ENCODE measurements at regions of chr17 and their contacts with region 1.

Region 1: DNA sequence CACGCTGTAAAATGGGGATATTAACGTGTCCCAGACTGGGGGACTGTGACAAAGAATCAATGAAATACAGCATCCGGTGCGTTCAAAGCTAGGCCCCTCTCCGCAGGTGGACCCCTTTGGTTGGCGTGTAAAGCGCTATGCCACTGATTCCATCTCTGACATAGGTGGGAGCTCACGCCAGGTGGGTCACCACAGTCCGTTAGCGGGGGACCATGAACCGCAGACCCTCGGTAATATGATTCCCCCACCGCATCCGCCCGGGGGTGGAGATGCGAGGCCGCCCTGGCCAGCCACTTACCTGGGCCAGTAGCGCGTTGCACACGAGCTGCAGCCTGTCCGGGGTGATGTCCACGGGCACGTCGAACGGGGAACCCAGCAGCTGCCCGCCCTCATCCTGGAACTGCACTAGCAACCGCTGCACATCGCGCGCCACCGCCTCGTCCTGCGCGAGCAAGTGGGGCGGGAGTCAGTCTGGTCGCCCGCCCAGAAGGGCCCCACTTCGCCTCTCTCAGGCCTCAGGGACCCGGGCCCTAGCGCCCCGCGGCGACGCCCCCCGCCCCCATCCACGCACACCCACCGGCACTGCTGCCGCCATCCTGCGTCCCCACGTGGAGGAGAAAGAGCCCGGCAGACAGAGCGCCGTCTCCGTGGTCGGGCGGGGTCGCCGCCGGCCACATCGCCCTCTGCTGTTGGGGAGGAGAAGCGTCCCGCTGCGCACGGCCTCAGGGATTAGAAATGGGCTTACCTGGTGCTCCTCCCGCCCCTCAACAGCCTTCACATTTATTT is at the start of gene NLE1:
- DNase-seq: peak; percentile 84
- H3K4me3 ChIP-seq: peak within 1 kb of the TSS; percentile 59 to 91 (median 78)
- H3K27ac ChIP-seq: peak within 1 kb of the TSS in 3 of 4 donors; percentile 35 to 63 (median 46)
- H3K4me1 ChIP-seq: peaks cover 0 to 18% (median 13%) of the 10 kb centered on the region in 4 donors
- H3K27me3 ChIP-seq: no peaks in the 10 kb centered on the region
- CTCF ChIP-seq: peak; percentile 81 to 96 (median 94)
- EP300 ChIP-seq: no peak
- POLR2A ChIP-seq: peak; percentile 33
- total RNA-seq, gene NLE1: 4.0 to 13.2 (median 6.9) TPM

Region 2: DNA sequence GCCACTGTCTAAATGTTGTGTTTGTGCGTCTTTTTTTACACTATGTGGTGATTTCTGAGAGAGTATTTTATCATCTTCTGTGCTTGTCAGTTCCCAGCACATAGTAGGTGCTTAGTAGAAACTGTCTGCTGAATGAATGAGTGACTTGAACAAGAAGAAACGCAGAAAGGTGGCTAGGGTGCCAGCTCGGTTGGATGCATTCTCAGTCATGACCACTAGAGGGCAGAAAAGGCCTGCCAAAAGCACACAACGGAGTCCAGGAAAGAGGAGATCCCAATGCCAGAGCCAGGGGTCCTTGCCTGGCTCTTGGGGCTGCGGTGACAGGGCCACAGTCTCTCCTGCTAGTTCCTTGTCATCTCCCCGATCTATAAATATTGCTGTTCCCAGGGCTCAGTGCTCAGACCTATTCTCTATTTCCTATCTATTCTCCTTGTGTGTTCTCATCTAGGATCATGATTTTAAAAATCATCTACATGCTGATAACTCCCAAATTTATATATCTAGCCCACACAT is 721.6 kb before region 1 on chr17:
- in situ Hi-C with region 1: loop called in 1 of 4 experiments (anchors 25 kb)
- intact Hi-C with region 1: no loop called
- DNase-seq: peak; percentile 67
- H3K4me3 ChIP-seq: no peak overlapping the region
- H3K27ac ChIP-seq: no peak overlapping the region
- H3K4me1 ChIP-seq: peaks cover 0 to 3% (median 0%) of the 10 kb centered on the region in 4 donors
- H3K27me3 ChIP-seq: peaks cover 49% of the 10 kb centered on the region
- CTCF ChIP-seq: peak; percentile 84 to 97 (median 95)
- EP300 ChIP-seq: no peak
- POLR2A ChIP-seq: no peak

Region 3: GRCh38 chr17:34584805-34585416 is 557.0 kb before region 1 on chr17:
- in situ Hi-C with region 1: loop called in 1 of 4 experiments (anchors 25 kb)
- intact Hi-C with region 1: no loop called
- DNase-seq: no peak
- H3K4me3 ChIP-seq: no peak overlapping the region
- H3K27ac ChIP-seq: no peak overlapping the region
- H3K4me1 ChIP-seq: peaks cover 14 to 22% (median 20%) of the 10 kb centered on the region in 4 donors
- H3K27me3 ChIP-seq: peaks cover 68% of the 10 kb centered on the region
- CTCF ChIP-seq: no peak
- EP300 ChIP-seq: no peak
- POLR2A ChIP-seq: no peak

Region 4: GRCh38 chr17:35560703-35561102 is 418.8 kb after region 1 on chr17 and contains the start of gene SLFN14:
- in situ Hi-C with region 1: no loop called
- intact Hi-C with region 1: no loop called
- DNase-seq: no peak
- H3K4me3 ChIP-seq: no peak within 1 kb of the TSS
- H3K27ac ChIP-seq: no peak within 1 kb of the TSS
- H3K4me1 ChIP-seq: no peaks in the 10 kb centered on the region
- H3K27me3 ChIP-seq: peaks cover 29% of the 10 kb centered on the region
- CTCF ChIP-seq: no peak
- EP300 ChIP-seq: no peak
- POLR2A ChIP-seq: no peak
- total RNA-seq, gene SLFN14: not detected

Measured in transverse colon (tissue), 4 donors.